Naive thymus-derived CD4-positive, alpha-beta T cell (primary cell): ENCODE measurements at regions of chrX and their contacts with region 1.

Region 1: DNA sequence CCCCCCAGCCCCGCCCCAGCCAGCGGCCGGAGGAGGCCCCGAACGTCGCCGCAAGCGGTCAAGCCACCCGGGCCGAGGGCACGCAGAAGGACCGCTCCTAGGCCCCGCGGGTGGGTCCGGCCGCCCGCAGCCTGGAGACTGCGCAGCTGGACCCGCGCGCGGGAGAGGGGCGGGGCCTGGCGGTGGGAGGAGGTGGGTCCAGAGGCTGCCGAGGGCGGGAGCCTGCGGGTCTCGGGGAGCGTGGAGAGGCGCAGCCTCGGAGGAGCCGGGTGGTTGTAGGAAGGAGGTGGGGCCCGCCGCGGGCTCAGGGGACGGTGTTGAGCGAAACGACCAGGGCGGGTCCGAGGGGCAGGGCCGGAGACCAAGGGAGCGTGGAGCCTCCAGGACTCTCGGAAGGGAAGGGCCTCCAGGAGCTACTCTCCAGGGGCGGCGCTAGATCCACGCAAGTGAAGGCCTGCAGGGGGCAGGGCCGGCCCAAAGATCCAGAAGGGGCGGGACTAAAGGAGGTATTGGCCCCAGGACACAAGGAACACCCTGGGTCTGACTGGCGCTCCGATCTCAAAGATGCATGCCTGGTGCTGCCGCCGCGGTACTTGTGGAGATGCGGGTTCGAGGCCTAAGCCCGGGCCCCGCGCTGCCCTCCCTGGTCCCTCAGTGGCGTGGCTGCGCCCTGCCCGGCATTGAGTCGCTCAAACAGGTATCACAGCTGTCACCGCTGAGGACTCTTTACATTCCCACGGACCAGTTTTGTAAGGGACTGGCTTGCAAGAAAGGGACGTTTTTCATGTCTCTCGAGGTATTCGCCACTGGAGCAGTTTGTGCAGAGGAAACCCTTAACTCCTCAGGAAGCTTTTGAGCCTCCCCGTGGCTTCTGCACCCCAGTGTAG is 5.9 kb downstream of the TIMM17B start:
- DNase-seq: peak; percentile 61 to 79 (median 75)
- ATAC-seq: peak; percentile 94
- H3K4me3 ChIP-seq: peak overlapping the region; percentile 53
- H3K4me3 Mint-ChIP-seq: peak overlapping the region; percentile 70 to 98 (median 86)
- H3K27ac ChIP-seq: peak overlapping the region; percentile 81
- H3K27ac Mint-ChIP-seq: peak overlapping the region in 8 of 9 donors; percentile 14 to 82 (median 64)
- H3K4me1 ChIP-seq: peaks cover 7 to 8% of the 10 kb centered on the region in 2 donors
- H3K4me1 Mint-ChIP-seq: peaks cover 12 to 31% (median 20%) of the 10 kb centered on the region in 7 donors
- H3K27me3 ChIP-seq: no peaks in the 10 kb centered on the region
- H3K27me3 Mint-ChIP-seq: no peaks in the 10 kb centered on the region

Region 2: DNA sequence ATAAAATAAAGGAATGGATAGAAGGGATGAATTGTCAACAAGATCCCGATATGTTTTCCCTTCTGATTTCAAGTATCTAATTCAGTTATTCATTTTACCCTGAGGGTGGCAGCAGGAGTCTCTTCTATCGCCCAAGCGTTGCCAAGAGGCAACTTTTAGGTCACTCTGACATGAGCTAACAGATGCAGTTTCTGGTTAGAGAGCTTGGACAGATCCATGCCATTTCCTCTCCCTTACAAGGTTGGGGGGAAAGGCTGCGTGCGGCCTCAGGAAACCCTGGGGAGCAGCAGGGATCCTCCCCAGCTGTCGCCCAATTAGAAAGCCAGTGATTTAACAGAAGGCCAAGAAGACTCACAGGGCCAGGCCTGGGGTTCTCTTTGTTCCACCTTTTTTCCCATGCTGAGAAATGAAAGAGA is 243.3 kb before region 1 on chrX:
- CTCF ChIA-PET with region 1: interaction called, 7 read pairs
- POLR2A ChIA-PET with region 1: interaction called, 3 read pairs
- intact Hi-C with region 1: loop called (anchors 1 to 5 kb)
- DNase-seq: peak in 8 of 9 donors; percentile 17 to 54 (median 38)
- ATAC-seq: peak; percentile 70
- H3K4me3 ChIP-seq: no peak overlapping the region
- H3K4me3 Mint-ChIP-seq: no peak overlapping the region
- H3K27ac ChIP-seq: no peak overlapping the region
- H3K27ac Mint-ChIP-seq: peak overlapping the region in 3 of 9 donors; percentile 42 to 58 (median 53)
- H3K4me1 ChIP-seq: no peaks in the 10 kb centered on the region
- H3K4me1 Mint-ChIP-seq: peaks cover 0 to 18% (median 13%) of the 10 kb centered on the region in 7 donors
- H3K27me3 ChIP-seq: no peaks in the 10 kb centered on the region
- H3K27me3 Mint-ChIP-seq: no peaks in the 10 kb centered on the region

Region 3: GRCh38 chrX:48696301-48697181 is 195.1 kb before region 1 on chrX and contains the start of gene SUV39H1:
- CTCF ChIA-PET with region 1: no interaction called
- POLR2A ChIA-PET with region 1: no interaction called
- intact Hi-C with region 1: loop called (anchors 2 to 5 kb)
- DNase-seq: peak; percentile 76 to 90 (median 85)
- ATAC-seq: peak; percentile 97
- H3K4me3 ChIP-seq: peak within 1 kb of the TSS; percentile 62
- H3K4me3 Mint-ChIP-seq: peak within 1 kb of the TSS; percentile 86 to 95 (median 90)
- H3K27ac ChIP-seq: peak within 1 kb of the TSS; percentile 82
- H3K27ac Mint-ChIP-seq: peak within 1 kb of the TSS; percentile 91 to 96 (median 95)
- H3K4me1 ChIP-seq: peaks cover 0 to 13% of the 10 kb centered on the region in 2 donors
- H3K4me1 Mint-ChIP-seq: peaks cover 6 to 39% (median 28%) of the 10 kb centered on the region in 7 donors
- H3K27me3 ChIP-seq: no peaks in the 10 kb centered on the region
- H3K27me3 Mint-ChIP-seq: no peaks in the 10 kb centered on the region
- total RNA-seq, gene SUV39H1: 4.6 to 23.3 (median 8.6) TPM

Region 4: DNA sequence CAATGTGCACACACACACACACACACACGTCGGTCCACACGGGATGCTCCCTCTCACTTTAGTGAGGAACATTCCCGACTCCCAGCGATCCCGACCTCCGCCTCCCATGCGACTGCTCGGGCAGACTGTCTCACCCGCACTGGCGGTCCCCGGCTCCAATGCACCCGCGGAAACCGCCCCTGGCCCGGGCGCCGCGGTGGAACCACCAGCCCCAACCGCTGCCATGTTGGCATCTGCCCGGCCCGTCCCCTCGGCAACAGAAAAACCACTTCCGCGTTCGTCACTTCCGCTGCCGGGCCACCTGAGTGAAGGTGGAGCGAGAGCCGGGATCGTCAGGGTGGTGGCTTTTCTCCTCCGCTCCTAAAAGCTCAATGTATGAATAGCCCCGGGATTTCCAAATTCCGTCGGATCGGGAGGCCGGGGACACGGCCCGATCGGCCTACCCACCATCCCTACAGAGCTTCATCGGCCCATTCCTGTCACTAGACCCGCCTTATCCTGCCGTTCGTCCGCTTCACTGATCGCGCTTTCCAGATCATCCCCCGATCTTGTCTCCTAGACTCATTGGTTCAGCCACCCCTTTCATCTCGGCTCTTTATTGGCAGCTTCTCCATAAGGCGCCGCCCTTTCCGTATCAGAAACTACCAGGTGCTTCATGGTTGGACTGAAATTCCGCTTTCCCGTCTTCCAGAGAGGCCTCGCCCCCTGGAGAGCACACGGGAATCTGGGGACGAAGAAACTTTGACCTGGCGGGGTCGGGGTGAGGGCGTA is 20.0 kb after region 1 on chrX and contains the start of gene SLC35A2:
- CTCF ChIA-PET with region 1: interaction called, 6 read pairs
- POLR2A ChIA-PET with region 1: interaction called, 29 read pairs
- intact Hi-C with region 1: loop called in 1 of 2 experiments (anchors 1 kb)
- DNase-seq: peak; percentile 75 to 92 (median 90)
- ATAC-seq: peak; percentile 78
- H3K4me3 ChIP-seq: peak within 1 kb of the TSS; percentile 77
- H3K4me3 Mint-ChIP-seq: peak within 1 kb of the TSS; percentile 86 to 96 (median 90)
- H3K27ac ChIP-seq: peak within 1 kb of the TSS; percentile 76
- H3K27ac Mint-ChIP-seq: peak within 1 kb of the TSS; percentile 86 to 98 (median 96)
- H3K4me1 ChIP-seq: peaks cover 32 to 42% of the 10 kb centered on the region in 2 donors
- H3K4me1 Mint-ChIP-seq: peaks cover 20 to 61% (median 42%) of the 10 kb centered on the region in 7 donors
- H3K27me3 ChIP-seq: no peaks in the 10 kb centered on the region
- H3K27me3 Mint-ChIP-seq: peaks cover 0 to 3% (median 0%) of the 10 kb centered on the region in 5 donors
- total RNA-seq, gene SLC35A2: 13.9 to 36.7 (median 18.5) TPM

Region 5: GRCh38 chrX:48937054-48937907 is 45.6 kb after region 1 on chrX:
- CTCF ChIA-PET with region 1: interaction called, 7 read pairs
- POLR2A ChIA-PET with region 1: interaction called, 48 read pairs
- intact Hi-C with region 1: loop called in 1 of 2 experiments (anchors 1 kb)
- DNase-seq: peak; percentile 59 to 96 (median 92)
- ATAC-seq: peak; percentile 75
- H3K4me3 ChIP-seq: peak overlapping the region; percentile 70
- H3K4me3 Mint-ChIP-seq: peak overlapping the region; percentile 78 to 96 (median 88)
- H3K27ac ChIP-seq: peak overlapping the region; percentile 97
- H3K27ac Mint-ChIP-seq: peak overlapping the region; percentile 96 to 99 (median 99)
- H3K4me1 ChIP-seq: peaks cover 69 to 80% of the 10 kb centered on the region in 2 donors
- H3K4me1 Mint-ChIP-seq: peaks cover 36 to 91% (median 80%) of the 10 kb centered on the region in 7 donors
- H3K27me3 ChIP-seq: no peaks in the 10 kb centered on the region
- H3K27me3 Mint-ChIP-seq: peaks cover 0 to 3% (median 0%) of the 10 kb centered on the region in 5 donors

Region 6: DNA sequence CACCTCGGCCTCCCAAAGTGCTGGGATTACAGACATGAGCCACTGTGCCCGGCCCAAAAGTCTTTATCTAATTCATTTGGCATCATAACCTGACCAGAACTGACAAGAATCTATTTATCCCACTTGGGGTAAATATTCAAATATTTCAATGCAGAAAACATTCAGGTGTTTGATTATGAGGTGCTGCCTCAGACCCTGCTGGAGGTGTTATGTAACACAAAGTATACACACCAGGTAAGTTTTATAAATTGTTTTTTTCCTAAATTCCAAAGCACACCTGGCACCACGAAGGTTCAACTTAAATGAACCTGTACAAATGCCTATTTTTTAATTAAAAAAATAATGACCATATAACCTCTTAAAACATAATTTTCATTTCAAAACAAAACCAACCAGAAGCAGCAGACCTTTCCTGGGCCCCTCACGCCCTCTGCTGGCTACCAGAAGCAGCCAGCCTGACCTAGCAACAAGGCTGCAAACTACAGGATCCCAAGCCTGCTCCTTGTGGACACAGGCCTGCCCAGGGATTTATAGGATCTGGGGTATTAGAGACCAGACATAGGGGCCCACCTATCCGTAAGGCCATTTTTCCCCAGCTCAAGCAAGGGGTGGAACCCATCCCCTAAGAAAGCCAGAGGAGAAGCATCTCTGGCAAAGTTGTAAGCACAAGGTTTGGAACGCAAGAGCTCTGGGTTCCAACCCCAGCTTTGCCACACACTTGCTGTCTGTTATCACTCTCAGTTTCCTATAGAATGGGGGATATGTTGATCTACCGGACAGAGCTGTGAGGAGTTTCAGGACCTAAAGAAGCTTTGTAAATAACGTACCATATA is 54.1 kb after region 1 on chrX:
- CTCF ChIA-PET with region 1: interaction called, 10 read pairs
- POLR2A ChIA-PET with region 1: interaction called, 48 read pairs
- intact Hi-C with region 1: loop called in 1 of 2 experiments (anchors 1 kb)
- DNase-seq: peak; percentile 30 to 69 (median 46)
- ATAC-seq: peak; percentile 74
- H3K4me3 ChIP-seq: no peak overlapping the region
- H3K4me3 Mint-ChIP-seq: peak overlapping the region; percentile 25 to 61 (median 50)
- H3K27ac ChIP-seq: peak overlapping the region; percentile 22
- H3K27ac Mint-ChIP-seq: peak overlapping the region; percentile 44 to 88 (median 71)
- H3K4me1 ChIP-seq: peaks cover 23 to 25% of the 10 kb centered on the region in 2 donors
- H3K4me1 Mint-ChIP-seq: peaks cover 20 to 59% (median 48%) of the 10 kb centered on the region in 7 donors
- H3K27me3 ChIP-seq: no peaks in the 10 kb centered on the region
- H3K27me3 Mint-ChIP-seq: no peaks in the 10 kb centered on the region

Region 7: GRCh38 chrX:49276671-49277534 is 385.3 kb after region 1 on chrX:
- CTCF ChIA-PET with region 1: no interaction called
- POLR2A ChIA-PET with region 1: no interaction called
- intact Hi-C with region 1: no loop called
- DNase-seq: no peak
- ATAC-seq: no peak
- H3K4me3 ChIP-seq: no peak overlapping the region
- H3K4me3 Mint-ChIP-seq: peak overlapping the region; percentile 32 to 91 (median 76)
- H3K27ac ChIP-seq: peak overlapping the region; percentile 50
- H3K27ac Mint-ChIP-seq: peak overlapping the region; percentile 76 to 94 (median 88)
- H3K4me1 ChIP-seq: peaks cover 61 to 77% of the 10 kb centered on the region in 2 donors
- H3K4me1 Mint-ChIP-seq: peaks cover 39 to 87% (median 78%) of the 10 kb centered on the region in 7 donors
- H3K27me3 ChIP-seq: no peaks in the 10 kb centered on the region
- H3K27me3 Mint-ChIP-seq: no peaks in the 10 kb centered on the region